ENCODE measurements at regions of chr20 and their contacts with region 1.

Region 1: GRCh38 chr20:58634521-58635278 is 16.4 kb upstream of the STX16 start:
- DNase-seq: no peak
- H3K4me3 ChIP-seq: no peak overlapping the region
- H3K27me3 ChIP-seq: no peaks in the 10 kb centered on the region
- CTCF ChIP-seq: no peak

Region 2: GRCh38 chr20:58256842-58257241 is 377.9 kb before region 1 on chr20:
- CTCF ChIA-PET with region 1: no interaction called
- POLR2A ChIA-PET with region 1: no interaction called
- DNase-seq: no peak
- H3K4me3 ChIP-seq: no peak overlapping the region
- H3K27me3 ChIP-seq: no peaks in the 10 kb centered on the region
- CTCF ChIP-seq: no peak

Region 3: GRCh38 chr20:58611631-58612048 is 23.1 kb before region 1 on chr20:
- CTCF ChIA-PET with region 1: no interaction called
- POLR2A ChIA-PET with region 1: interaction called, 12 read pairs
- DNase-seq: no peak
- H3K4me3 ChIP-seq: no peak overlapping the region
- H3K27me3 ChIP-seq: no peaks in the 10 kb centered on the region; the same call in 1 of the 2 replicates
- CTCF ChIP-seq: no peak

Measured in BJ (cell line).